CD8-positive, alpha-beta T cell (primary cell): ENCODE measurements at regions of chr3 and their contacts with region 1.

Region 1: DNA sequence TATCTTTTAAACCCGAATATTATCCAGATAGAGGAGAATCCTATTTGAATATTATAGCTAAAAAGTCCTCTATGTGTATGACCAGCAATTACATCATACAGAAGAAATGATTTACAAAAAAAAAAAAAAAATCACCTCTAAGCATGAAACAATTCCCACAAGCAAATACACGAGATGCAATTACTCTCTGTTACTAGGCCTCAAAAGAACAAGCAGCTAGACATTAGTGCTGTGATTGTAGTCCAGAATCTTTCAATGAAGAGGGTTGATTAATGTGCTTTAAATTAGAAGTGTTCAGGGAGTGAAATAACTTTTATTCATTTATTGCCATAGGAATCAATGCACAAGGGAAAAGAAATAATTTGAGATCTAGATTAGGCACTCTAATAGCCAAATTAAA is 1379.5 kb upstream of the GBE1 start:
- DNase-seq: no peak
- ATAC-seq: no peak
- H3K4me3 ChIP-seq: no peak overlapping the region
- H3K4me3 Mint-ChIP-seq: no peak overlapping the region
- H3K27ac ChIP-seq: no peak overlapping the region
- H3K27ac Mint-ChIP-seq: no peak overlapping the region
- H3K4me1 ChIP-seq: no peaks in the 10 kb centered on the region
- H3K4me1 Mint-ChIP-seq: no peaks in the 10 kb centered on the region
- H3K27me3 ChIP-seq: no peaks in the 10 kb centered on the region
- H3K27me3 Mint-ChIP-seq: no peaks in the 10 kb centered on the region
- CTCF ChIP-seq: no peak

Region 2: GRCh38 chr3:81198756-81199155 is 1942.2 kb before region 1 on chr3:
- CTCF ChIA-PET with region 1: no interaction called
- POLR2A ChIA-PET with region 1: no interaction called
- intact Hi-C with region 1: loop called in 1 of 2 experiments (anchors 5 kb)
- DNase-seq: no peak
- ATAC-seq: no peak
- H3K4me3 ChIP-seq: no peak overlapping the region
- H3K4me3 Mint-ChIP-seq: no peak overlapping the region
- H3K27ac ChIP-seq: no peak overlapping the region
- H3K27ac Mint-ChIP-seq: no peak overlapping the region
- H3K4me1 ChIP-seq: no peaks in the 10 kb centered on the region
- H3K4me1 Mint-ChIP-seq: no peaks in the 10 kb centered on the region
- H3K27me3 ChIP-seq: no peaks in the 10 kb centered on the region
- H3K27me3 Mint-ChIP-seq: no peaks in the 10 kb centered on the region
- CTCF ChIP-seq: no peak